ENCODE measurements at regions of chr12 and their contacts with region 1.

Region 1: DNA sequence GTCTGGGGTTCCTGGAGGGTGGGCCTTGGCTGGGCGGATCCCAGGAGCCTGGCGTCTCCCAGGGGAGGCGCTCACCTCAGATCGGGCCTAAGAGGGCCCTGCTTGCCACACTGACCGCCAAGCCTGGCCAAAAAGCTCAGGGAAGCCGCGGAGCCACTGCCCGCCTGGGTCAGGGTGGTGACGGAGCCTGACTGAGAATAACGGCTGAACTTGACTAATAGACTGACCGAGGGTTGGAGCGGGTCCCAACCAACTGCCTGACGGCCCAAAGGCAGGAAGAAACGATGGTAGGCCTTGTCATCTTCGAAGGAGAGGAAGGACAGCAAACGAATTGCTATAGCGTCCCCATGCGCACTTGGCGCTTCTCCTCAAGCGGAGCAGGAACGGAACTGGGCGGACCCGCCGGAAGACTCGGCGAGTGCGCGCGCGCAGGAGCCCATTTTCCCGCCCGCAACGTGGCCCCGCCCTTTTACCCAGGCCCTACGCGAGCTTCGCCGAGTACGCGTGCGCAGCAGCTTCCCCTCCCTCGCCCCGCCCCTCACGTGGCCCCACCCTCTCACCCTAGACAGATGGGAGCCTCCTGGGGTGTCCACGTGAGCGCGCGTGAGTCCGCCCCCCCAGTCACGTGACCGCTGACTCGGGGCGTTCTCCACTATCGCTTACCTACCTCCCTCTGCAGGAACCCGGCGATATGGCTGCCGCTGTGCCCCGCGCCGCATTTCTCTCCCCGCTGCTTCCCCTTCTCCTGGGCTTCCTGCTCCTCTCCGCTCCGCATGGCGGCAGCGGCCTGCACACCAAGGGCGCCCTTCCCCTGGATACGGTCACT is at the starts of genes ERP29 and TMEM116:
- DNase-seq: peak; percentile 97 to 100
- H3K4me3 ChIP-seq: peak within 1 kb of the TSS; percentile 77 to 96 (median 89)
- H3K27ac ChIP-seq: peak within 1 kb of the TSS; percentile 93
- H3K4me1 ChIP-seq: peaks cover 4 to 13% (median 5%) of the 10 kb centered on the region in 4 experiments
- H3K27me3 ChIP-seq: no peaks in the 10 kb centered on the region
- CTCF ChIP-seq: peak; percentile 37 to 62 (median 50)
- EP300 ChIP-seq: peak in 1 of 2 experiments; percentile 36; a peak in 1 of 3 replicates
- POLR2A ChIP-seq: peak; percentile 95 to 98
- RAD21 ChIP-seq: peak; percentile 45 to 54; a peak in 3 of 4 replicates
- total RNA-seq, gene ERP29: 168 and 171 TPM in 2 replicates
- total RNA-seq, gene TMEM116: 8.1 and 8.9 TPM in 2 replicates

Region 2: DNA sequence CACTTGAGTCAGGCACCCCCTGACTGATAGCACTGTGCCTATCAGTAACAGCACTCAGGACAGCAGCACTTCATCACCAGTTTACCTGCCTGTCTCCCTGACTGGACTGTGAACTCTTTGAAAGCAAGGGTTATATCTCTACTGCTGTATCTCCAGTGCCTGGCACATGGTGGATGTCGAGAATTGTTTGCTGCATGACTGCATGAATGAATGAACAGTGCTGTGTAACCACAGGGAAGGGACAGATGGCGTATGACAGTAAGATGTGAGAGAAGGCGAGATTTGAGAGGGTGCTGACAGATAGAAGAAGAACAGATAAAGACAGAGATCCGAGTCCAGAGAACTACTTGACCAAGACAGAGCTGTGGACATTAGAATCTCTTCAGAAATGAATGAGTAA is 357.0 kb before region 1 on chr12:
- CTCF ChIA-PET with region 1: no interaction called
- POLR2A ChIA-PET with region 1: no interaction called
- DNase-seq: no peak
- H3K4me3 ChIP-seq: no peak overlapping the region
- H3K27ac ChIP-seq: no peak overlapping the region
- H3K4me1 ChIP-seq: no peaks in the 10 kb centered on the region
- H3K27me3 ChIP-seq: no peaks in the 10 kb centered on the region
- CTCF ChIP-seq: no peak
- EP300 ChIP-seq: no peak
- POLR2A ChIP-seq: no peak
- RAD21 ChIP-seq: no peak

Region 3: DNA sequence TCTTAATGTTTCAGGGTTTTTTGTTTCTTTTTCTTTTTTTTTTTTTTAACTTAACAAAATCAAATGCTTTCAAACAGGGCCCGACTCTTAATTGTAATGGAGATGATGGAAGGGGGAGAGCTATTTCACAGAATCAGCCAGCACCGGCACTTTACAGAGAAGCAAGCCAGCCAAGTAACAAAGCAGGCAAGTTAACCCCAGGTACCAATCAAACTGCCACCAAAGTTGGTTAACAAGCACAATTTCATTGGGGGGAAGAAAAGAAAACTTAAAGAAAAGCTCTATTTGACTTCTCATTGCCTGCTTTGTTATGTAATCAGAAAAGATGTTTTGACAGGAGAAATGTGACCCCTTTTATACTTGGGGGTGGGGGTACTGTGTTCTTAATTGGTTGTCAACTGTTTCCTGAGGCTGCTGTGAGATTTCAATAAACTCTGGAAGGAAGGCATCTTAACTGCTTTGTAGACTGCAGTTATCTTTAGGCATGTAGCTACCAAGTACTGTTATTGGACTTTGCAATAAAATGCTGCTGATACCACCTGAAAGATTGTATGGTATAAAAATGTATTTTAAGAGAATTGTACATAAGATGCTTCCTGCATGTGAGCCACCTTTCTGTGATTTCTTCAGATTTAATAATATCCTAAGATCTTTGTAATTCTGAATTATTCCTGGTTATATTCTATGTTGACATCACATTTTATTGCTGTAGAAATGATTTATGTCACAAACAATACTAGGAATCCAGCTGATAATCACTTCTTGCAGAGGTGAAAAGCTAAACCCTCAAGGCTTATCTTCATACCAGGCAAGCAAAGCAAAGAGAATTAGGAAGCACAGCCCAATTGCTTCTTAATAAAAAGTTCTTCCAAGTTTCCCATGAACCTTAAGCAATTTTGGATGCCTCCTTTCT is 144.1 kb before region 1 on chr12:
- CTCF ChIA-PET with region 1: no interaction called
- POLR2A ChIA-PET with region 1: interaction called, 13 read pairs
- DNase-seq: peak in 1 of 2 experiments; percentile 61
- H3K4me3 ChIP-seq: peak overlapping the region in 2 of 4 experiments; percentile 4 to 46; a peak in 3 of 8 replicates
- H3K27ac ChIP-seq: 0 out of 2 replicates have a peak overlapping the region, but pooled peaks have one; percentile 43
- H3K4me1 ChIP-seq: peaks cover 6 to 32% (median 19%) of the 10 kb centered on the region in 4 experiments
- H3K27me3 ChIP-seq: no peaks in the 10 kb centered on the region
- CTCF ChIP-seq: no peak
- EP300 ChIP-seq: no peak
- POLR2A ChIP-seq: no peak
- RAD21 ChIP-seq: no peak

Region 4: GRCh38 chr12:111993292-111994150 is 19.5 kb before region 1 on chr12:
- CTCF ChIA-PET with region 1: interaction called, 5 read pairs
- POLR2A ChIA-PET with region 1: interaction called, 32 read pairs
- DNase-seq: no peak
- H3K4me3 ChIP-seq: no peak overlapping the region
- H3K27ac ChIP-seq: no peak overlapping the region
- H3K4me1 ChIP-seq: no peaks in the 10 kb centered on the region
- H3K27me3 ChIP-seq: no peaks in the 10 kb centered on the region
- CTCF ChIP-seq: no peak
- EP300 ChIP-seq: no peak
- POLR2A ChIP-seq: no peak
- RAD21 ChIP-seq: no peak

Region 5: DNA sequence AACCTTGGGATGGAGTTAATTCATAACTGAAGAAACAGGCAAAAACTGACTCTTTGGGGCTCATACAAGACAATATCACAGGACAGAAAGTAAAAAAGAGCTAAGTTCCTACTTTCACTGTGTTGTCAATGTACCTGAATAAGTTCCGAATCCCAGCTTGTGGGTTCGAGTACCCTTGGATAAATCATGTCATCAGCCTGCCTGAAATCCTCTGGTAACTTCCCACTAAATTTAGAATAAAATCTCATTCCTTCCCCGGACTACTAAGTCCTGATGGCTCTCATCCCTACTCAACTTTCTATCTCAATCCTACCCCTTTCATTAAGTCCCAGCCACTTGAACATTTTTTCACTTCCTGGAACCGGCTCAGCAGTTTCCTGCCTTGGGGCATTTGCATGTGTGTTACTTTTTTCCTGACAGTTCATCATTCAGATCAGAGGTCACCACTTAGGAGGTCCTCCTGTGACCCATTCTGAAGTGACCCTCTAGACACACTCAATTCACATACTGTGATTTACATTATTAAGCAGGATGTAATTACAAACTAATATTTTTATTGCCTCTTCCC is 12.9 kb after region 1 on chr12:
- CTCF ChIA-PET with region 1: interaction called, 8 read pairs
- POLR2A ChIA-PET with region 1: interaction called, 88 read pairs
- DNase-seq: no peak
- H3K4me3 ChIP-seq: no peak overlapping the region
- H3K27ac ChIP-seq: no peak overlapping the region
- H3K4me1 ChIP-seq: peaks cover 0 to 2% (median 0%) of the 10 kb centered on the region in 4 experiments; a peak in 1 of 7 replicates
- H3K27me3 ChIP-seq: no peaks in the 10 kb centered on the region
- CTCF ChIP-seq: no peak
- EP300 ChIP-seq: no peak
- POLR2A ChIP-seq: no peak
- RAD21 ChIP-seq: no peak

Region 6: DNA sequence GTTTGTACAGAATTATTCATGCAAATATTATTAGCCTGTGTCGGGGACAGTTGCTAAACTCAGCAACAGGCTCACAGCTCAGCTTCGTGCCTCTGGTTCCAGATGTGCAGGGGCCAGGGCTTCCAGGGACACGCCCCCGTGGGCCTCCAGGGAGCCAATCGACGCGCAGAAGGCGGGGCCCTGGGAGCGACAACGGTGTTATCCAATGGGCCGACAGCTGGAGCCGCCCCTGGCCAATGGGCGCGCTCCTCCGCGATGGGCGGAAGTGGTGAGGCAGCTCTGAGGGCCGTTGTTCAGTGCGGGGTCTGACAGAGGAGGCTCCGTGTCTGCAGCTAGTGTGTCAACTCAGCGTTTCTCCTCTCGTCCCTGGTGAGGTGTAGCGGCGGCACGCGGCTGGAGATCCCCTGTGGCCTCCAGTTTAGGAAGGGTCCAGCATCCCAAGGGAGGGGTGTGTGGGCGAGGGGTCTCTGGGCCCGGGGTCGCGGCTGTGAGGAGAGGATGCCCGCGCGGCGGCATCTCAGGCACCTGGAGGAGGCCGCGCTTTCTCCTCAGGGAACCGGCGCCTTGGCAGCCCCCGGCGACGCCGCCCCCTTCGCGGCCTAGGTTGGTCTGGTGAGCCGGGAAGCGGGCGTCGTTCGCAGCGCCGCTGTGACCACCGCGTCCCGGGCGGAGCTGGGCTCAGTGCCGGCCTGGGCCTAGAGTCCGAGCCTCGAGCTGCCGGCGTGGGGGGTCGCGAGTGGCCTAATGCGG is 112.4 kb after region 1 on chr12 and contains the start of gene TRAFD1:
- CTCF ChIA-PET with region 1: no interaction called
- POLR2A ChIA-PET with region 1: interaction called, 10 read pairs
- DNase-seq: peak; percentile 88 to 99
- H3K4me3 ChIP-seq: peak within 1 kb of the TSS; percentile 51 to 87 (median 82)
- H3K27ac ChIP-seq: no peak within 1 kb of the TSS
- H3K4me1 ChIP-seq: peaks cover 0 to 4% (median 1%) of the 10 kb centered on the region in 4 experiments; a peak in 4 of 7 replicates
- H3K27me3 ChIP-seq: no peaks in the 10 kb centered on the region
- CTCF ChIP-seq: no peak
- EP300 ChIP-seq: no peak
- POLR2A ChIP-seq: peak in 1 of 2 experiments; percentile 81; a peak in 2 of 3 replicates
- RAD21 ChIP-seq: no peak
- total RNA-seq, gene TRAFD1: 33.1 and 36.3 TPM in 2 replicates

Measured in H1 (cell line).